ENCODE measurements at regions of chr10 and their contacts with region 1.

Region 1: DNA sequence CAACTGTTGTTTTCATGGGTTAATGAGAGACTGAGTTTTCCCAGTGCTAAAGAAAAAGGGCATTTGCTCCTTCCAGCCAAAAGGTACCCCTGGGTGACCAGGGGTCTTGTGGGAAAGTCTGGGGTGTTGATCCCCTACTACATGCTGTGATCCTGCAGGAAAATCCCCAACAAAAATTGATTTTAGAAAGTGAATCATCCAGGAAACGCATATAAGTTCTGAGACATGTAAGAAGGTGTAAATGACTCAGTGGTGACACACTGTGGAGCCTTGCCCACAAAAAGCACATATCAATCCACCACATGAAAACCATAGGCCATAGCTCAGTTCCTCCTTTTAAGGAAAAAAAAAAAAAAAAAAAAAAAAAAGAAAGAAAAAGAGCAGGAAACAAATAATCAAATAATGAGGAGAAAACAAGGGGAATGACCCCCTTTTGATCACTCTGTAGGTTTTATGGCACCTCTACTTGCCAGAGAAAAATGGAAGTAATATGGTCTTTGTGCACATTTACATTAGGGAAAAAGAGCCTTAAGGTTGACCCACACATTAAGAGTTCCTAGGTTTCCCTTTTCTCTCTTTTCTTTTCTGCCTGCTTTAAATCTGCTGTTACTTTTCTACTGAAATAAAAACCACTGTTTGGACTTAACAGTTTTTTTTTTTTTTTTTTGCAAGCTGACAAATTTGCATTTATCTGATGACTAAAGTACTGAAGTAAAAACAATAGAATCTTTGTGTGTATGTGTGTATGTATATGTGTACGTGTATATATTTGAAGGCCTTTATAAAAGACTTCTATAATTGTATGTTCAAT is 386.0 kb downstream of the KIF20B start:
- DNase-seq: no peak
- H3K4me3 ChIP-seq: no peak overlapping the region
- H3K27me3 ChIP-seq: no peaks in the 10 kb centered on the region
- CTCF ChIP-seq: no peak

Region 2: DNA sequence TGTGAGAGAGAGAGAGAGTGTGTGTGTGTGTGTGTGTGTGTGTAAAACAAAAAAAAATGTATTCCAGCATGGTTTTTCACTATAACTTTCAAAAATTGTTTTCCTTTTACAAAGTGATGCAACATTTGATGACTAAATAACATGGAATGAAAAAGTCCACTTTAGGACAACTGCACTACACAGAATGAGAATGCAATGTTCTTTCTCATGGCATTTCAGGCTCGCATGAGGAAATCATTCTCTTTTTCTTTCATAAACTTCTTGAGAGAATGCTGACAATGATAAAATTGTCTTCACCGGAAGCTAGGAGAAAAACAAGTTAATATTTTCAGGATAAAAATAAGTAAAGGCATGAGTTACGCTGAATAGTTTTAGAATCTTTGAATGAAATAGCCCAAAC is 605.7 kb before region 1 on chr10:
- CTCF ChIA-PET with region 1: no interaction called
- POLR2A ChIA-PET with region 1: interaction called, 15 read pairs
- DNase-seq: peak; percentile 88
- H3K4me3 ChIP-seq: no peak overlapping the region
- H3K27me3 ChIP-seq: no peaks in the 10 kb centered on the region
- CTCF ChIP-seq: no peak

Region 3: GRCh38 chr10:89591111-89591795 is 496.1 kb before region 1 on chr10:
- CTCF ChIA-PET with region 1: no interaction called
- POLR2A ChIA-PET with region 1: no interaction called
- DNase-seq: no peak
- H3K4me3 ChIP-seq: no peak overlapping the region
- H3K27me3 ChIP-seq: no peaks in the 10 kb centered on the region
- CTCF ChIP-seq: no peak

Region 4: GRCh38 chr10:90075995-90076394 is 11.4 kb before region 1 on chr10:
- CTCF ChIA-PET with region 1: no interaction called
- POLR2A ChIA-PET with region 1: no interaction called
- DNase-seq: no peak
- H3K4me3 ChIP-seq: no peak overlapping the region
- H3K27me3 ChIP-seq: no peaks in the 10 kb centered on the region
- CTCF ChIP-seq: no peak

Region 5: DNA sequence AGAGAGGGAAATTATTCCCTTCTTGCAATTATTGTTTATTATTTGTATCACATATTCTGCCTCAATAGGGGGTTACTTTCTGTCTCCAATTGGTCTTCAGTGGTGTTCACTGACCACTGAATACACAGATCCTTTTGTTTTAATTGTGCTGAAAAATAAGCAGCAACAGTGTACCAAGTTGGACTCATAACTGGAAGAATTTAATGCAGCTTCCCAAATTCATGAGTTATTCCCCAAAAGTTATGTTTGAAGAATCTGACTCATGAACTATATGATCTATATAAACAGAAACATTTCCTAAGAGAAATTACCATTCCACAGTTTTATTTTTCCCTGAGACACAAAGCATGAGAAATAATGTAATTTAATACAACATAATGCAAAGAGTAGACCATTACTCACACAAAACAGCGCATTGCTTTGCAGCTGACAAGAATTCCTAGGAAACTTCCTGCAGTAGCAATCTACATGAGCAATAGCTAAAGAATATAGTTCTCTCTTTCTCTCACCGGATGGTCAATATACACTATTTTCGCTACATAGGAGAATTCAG is 291.2 kb after region 1 on chr10:
- CTCF ChIA-PET with region 1: no interaction called
- POLR2A ChIA-PET with region 1: no interaction called
- DNase-seq: no peak
- H3K4me3 ChIP-seq: no peak overlapping the region
- H3K27me3 ChIP-seq: no peaks in the 10 kb centered on the region
- CTCF ChIP-seq: no peak

Measured in BJ (cell line).